ENCODE measurements at regions of chr9 and their contacts with region 1.

Region 1: GRCh38 chr9:97411789-97412625 is at the start of gene TDRD7:
- DNase-seq: peak; percentile 97
- H3K4me3 Mint-ChIP-seq: peak within 1 kb of the TSS; percentile 87
- H3K27ac Mint-ChIP-seq: peak within 1 kb of the TSS; percentile 81
- H3K4me1 Mint-ChIP-seq: peaks cover 23% of the 10 kb centered on the region
- H3K27me3 Mint-ChIP-seq: peaks cover 34% of the 10 kb centered on the region
- total RNA-seq, gene TDRD7: 5.5 and 6.3 TPM in 2 replicates

Region 2: GRCh38 chr9:96256800-96257199 is 1155.2 kb before region 1 on chr9:
- intact Hi-C with region 1: no loop called
- DNase-seq: no peak
- H3K4me3 Mint-ChIP-seq: no peak overlapping the region
- H3K27ac Mint-ChIP-seq: no peak overlapping the region
- H3K4me1 Mint-ChIP-seq: peaks cover 4% of the 10 kb centered on the region
- H3K27me3 Mint-ChIP-seq: peaks cover 24% of the 10 kb centered on the region

Region 3: GRCh38 chr9:97038909-97039781 is 372.9 kb before region 1 on chr9 and contains the start of gene CTSV:
- intact Hi-C with region 1: no loop called
- DNase-seq: peak; percentile 95
- H3K4me3 Mint-ChIP-seq: peak within 1 kb of the TSS; percentile 85
- H3K27ac Mint-ChIP-seq: no peak within 1 kb of the TSS
- H3K4me1 Mint-ChIP-seq: peaks cover 4% of the 10 kb centered on the region
- H3K27me3 Mint-ChIP-seq: peaks cover 43% of the 10 kb centered on the region
- total RNA-seq, gene CTSV: 0.45 and 0.51 TPM in 2 replicates

Region 4: GRCh38 chr9:97398999-97399758 is 12.8 kb before region 1 on chr9:
- intact Hi-C with region 1: loop called (anchors 2 kb)
- DNase-seq: peak; percentile 91
- H3K4me3 Mint-ChIP-seq: no peak overlapping the region
- H3K27ac Mint-ChIP-seq: no peak overlapping the region
- H3K4me1 Mint-ChIP-seq: peaks cover 21% of the 10 kb centered on the region
- H3K27me3 Mint-ChIP-seq: peaks cover 37% of the 10 kb centered on the region

Region 5: DNA sequence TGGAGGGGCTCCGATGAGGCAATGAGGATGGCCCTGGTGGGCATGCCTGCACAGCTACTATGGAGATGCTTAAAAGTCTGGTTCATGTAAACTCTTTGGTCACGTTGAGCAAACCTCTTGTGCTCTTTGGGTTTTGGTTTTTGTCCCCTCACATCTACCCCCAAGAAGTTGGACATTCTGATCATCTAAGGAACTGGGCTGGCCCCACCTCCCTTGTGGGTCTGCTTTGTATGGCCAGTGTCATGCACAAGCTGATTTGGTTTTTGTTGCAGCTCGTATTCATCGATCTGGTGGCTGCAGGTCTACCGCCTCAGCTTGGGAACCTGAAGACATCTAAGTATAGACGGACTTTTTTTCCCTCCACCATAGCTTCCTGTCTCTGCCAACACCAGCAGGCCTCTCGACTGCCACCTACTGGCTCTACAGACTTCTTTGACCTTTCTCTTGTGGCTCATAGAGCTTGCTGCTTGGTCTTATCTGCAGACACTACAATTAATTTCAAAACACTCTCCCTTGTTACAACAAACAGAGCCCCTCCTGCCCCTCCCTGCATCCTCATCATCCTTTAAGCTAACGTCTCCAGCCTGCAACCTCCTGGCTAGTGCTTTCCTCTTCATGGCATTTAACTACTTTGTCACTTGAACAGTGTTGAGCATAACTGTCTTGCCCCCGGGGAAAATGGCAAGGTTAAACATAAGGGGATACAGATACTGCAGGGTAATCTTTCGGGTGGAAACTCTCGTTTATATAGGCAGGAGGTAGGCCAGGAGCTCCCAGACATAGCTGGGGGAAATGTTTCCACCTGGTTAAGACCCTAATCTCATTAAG is 186.7 kb after region 1 on chr9:
- intact Hi-C with region 1: loop called (anchors 1 kb)
- DNase-seq: peak; percentile 93
- H3K4me3 Mint-ChIP-seq: peak overlapping the region; percentile 38
- H3K27ac Mint-ChIP-seq: no peak overlapping the region
- H3K4me1 Mint-ChIP-seq: peaks cover 8% of the 10 kb centered on the region
- H3K27me3 Mint-ChIP-seq: peaks cover 2% of the 10 kb centered on the region

Region 6: DNA sequence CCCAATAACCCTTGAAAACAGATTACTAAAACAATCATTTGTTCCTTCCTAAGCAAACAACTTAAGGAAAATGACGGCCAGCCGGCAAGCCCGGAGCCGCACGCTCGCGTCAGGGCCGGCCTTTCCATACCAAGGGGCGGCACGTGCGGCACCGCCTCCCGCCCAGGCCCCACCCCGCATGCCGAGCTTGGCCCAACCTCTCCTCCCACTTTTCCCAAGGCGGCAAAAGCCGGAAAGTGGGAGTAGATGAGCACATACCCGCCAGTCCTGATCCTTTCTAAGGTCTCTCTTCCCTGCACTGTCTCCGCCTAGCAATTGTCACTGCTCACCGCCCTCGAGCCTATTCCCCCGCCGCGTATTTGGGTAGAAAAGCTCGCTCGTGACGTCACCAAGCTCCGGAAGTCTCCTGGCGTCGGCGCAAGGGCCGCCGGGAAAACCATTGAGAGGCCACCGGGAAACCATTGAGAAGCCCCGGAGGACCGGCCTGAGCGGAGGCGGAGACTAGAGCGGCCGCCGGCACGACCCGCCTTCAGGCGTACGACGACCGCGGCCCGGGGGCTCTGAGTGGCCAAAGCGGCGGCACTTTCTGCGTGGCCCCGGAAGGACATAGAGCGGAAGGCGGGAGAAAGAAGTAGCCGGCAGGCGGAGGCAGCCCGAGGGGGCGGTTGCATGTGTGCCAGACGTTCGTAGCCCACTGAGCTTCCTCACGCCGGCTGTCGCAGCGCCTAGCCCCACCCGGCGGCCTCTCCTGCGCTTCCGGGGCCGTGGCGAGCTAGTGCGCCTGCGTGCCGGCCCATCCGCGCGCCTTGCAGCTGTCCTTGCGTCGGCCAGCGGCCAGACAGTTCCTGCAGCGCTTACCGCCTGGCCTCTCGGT is 221.2 kb after region 1 on chr9 and contains the starts of genes NCBP1 and TSTD2:
- intact Hi-C with region 1: loop called (anchors 1 kb)
- DNase-seq: peak; percentile 99
- H3K4me3 Mint-ChIP-seq: peak within 1 kb of the TSS; percentile 95
- H3K27ac Mint-ChIP-seq: peak within 1 kb of the TSS; percentile 99
- H3K4me1 Mint-ChIP-seq: peaks cover 40% of the 10 kb centered on the region
- H3K27me3 Mint-ChIP-seq: no peaks in the 10 kb centered on the region
- total RNA-seq, gene NCBP1: 48.9 and 51.4 TPM in 2 replicates
- total RNA-seq, gene TSTD2: 17.1 and 17.7 TPM in 2 replicates

Measured in activated CD4-positive, alpha-beta T cell treated with anti-CD3 and anti-CD28 coated beads, Interleukin-2, amount 10 ng/mL, durations not matched to agents 24 days and 14 days (primary cell).